ENCODE measurements at regions of chr3 and their contacts with region 1.

Region 1: GRCh38 chr3:184298759-184299496 is at the start of gene PSMD2:
- DNase-seq: peak; percentile 95
- H3K4me3 ChIP-seq: peak within 1 kb of the TSS; percentile 80 to 100 (median 90)
- H3K27ac ChIP-seq: peak within 1 kb of the TSS; percentile 79
- H3K4me1 ChIP-seq: peaks cover 16% of the 10 kb centered on the region
- H3K27me3 ChIP-seq: no peaks in the 10 kb centered on the region
- CTCF ChIP-seq: no peak
- total RNA-seq, gene PSMD2: 276 to 541 TPM

Region 2: DNA sequence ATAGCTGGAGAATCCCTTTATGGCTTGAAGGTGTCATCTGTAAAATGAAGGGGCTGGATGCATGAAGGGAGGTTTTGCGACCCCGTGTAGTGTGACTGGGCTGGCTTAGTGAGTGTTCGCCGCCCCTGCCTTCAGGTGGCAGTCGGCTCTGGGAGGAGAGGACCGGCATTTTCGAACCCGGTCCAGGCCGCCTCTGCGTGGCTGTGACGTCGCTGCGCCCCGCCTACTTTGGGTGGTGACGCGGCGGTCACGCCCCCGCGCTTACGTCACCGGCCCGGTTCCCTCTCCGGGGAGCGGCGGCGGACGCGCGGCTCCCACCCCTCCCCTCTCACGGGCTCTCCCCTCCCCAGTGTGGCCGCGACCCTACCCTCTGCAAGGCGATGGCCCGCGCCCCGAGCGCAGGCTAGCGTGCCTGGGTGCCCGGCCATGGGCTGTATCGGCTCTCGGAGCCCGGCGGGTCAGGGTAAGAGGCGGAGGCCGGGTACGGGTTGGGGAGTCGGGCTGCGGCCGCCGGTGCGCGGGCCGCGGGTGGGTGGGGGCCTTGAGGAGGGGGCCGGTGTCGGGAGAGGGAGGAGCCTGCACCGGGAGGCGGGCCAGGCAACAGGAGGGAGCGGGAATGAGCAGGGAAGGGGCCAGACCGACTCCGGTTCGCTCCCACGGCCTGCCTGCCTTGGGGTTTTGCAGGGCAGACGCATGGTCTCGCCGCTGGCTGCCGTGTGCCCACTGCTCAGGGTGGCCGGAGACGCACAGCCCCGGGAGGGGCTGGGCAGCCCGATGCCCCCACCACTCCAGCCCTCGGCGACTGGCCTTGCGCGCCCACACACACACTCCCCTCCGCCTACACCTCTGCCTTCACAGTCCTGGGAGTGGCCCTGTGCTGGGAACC is 37.0 kb after region 1 on chr3:
- CTCF ChIA-PET with region 1: no interaction called
- dilution Hi-C with region 1: no loop called
- in situ Hi-C with region 1: no loop called
- intact Hi-C with region 1: loop called (anchors 1 kb)
- DNase-seq: peak; percentile 70
- H3K4me3 ChIP-seq: peak overlapping the region; percentile 51 to 77 (median 55)
- H3K27ac ChIP-seq: peak overlapping the region; percentile 81
- H3K4me1 ChIP-seq: peaks cover 75% of the 10 kb centered on the region
- H3K27me3 ChIP-seq: no peaks in the 10 kb centered on the region
- CTCF ChIP-seq: no peak

Region 3: DNA sequence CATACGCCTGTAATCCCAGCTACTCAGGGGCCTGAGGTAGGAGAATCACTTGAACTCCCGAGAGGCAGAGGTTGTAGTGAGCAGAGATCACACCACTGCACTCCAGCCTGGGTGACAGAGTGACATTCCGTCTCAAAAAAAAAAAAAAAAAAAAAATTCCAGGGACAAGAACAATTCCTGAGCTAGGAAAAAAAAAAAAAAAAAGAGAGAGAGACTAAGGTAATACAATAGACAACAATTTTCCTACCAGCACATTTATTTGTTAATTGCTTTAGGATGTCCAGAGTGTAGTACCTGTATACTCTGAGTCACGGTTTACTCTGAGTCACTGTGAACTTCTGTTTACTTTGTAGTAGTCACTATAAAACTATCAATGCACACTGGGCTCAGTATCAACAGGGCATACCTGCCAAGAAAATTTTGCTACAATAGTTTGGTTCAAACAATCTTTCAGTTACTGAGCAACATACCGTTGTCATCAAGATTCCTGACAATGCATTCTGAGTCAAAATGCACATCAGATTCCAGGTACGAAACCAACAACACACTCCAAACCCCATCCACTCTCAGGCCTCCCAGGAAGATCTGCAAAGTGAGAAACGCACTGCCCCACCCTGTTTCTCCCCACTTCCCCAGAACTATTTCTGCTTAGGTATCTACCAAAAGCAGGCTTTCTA is 1497.6 kb after region 1 on chr3:
- CTCF ChIA-PET with region 1: no interaction called
- dilution Hi-C with region 1: no loop called
- in situ Hi-C with region 1: no loop called
- intact Hi-C with region 1: no loop called
- DNase-seq: peak; percentile 98
- H3K4me3 ChIP-seq: no peak overlapping the region
- H3K27ac ChIP-seq: peak overlapping the region; percentile 99
- H3K4me1 ChIP-seq: peaks cover 33% of the 10 kb centered on the region
- H3K27me3 ChIP-seq: no peaks in the 10 kb centered on the region
- CTCF ChIP-seq: no peak